SK-N-SH (cell line): ENCODE measurements at regions of chr17 and their contacts with region 1.

Region 1: DNA sequence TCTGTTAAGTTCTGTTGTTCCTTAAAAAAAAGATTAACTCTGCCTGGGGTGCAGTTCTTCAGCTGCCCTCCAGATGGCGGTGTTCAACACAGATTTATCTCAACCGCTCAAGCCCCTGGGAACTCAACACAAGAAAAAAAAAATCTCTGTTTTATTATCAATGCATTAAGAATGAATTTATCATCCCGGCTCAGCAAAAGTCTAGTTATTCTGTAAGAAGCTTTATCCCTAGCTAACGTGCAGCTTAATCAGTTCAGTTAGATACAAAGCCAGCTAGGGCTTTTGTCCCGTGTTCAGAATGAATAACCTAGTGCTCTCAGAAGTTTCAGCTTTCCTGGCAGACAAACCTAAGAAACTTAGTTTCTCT is 475.9 kb upstream of the CCL2 start:
- DNase-seq: peak; percentile 57
- H3K4me3 ChIP-seq: peak overlapping the region in 1 of 2 experiments; percentile 39; a peak in 1 of 4 replicates
- H3K27ac ChIP-seq: no peak overlapping the region
- H3K4me1 ChIP-seq: peaks cover 0 to 3% of the 10 kb centered on the region in 2 experiments; a peak in 1 of 4 replicates
- H3K27me3 ChIP-seq: no peaks in the 10 kb centered on the region
- CTCF ChIP-seq: peak; percentile 97
- EP300 ChIP-seq: no peak
- RAD21 ChIP-seq: peak; percentile 96

Region 2: GRCh38 chr17:33520426-33521330 is 258.5 kb before region 1 on chr17:
- CTCF ChIA-PET with region 1: no interaction called
- POLR2A ChIA-PET with region 1: no interaction called
- DNase-seq: peak; percentile 83
- H3K4me3 ChIP-seq: no peak overlapping the region
- H3K27ac ChIP-seq: no peak overlapping the region
- H3K4me1 ChIP-seq: peaks cover 0 to 5% of the 10 kb centered on the region in 2 experiments; a peak in 1 of 4 replicates
- H3K27me3 ChIP-seq: no peaks in the 10 kb centered on the region
- CTCF ChIP-seq: peak; percentile 89
- EP300 ChIP-seq: no peak
- RAD21 ChIP-seq: peak; percentile 61

Region 3: GRCh38 chr17:33667052-33667509 is 112.1 kb before region 1 on chr17:
- CTCF ChIA-PET with region 1: no interaction called
- POLR2A ChIA-PET with region 1: no interaction called
- DNase-seq: no peak
- H3K4me3 ChIP-seq: no peak overlapping the region
- H3K27ac ChIP-seq: no peak overlapping the region
- H3K4me1 ChIP-seq: no peaks in the 10 kb centered on the region; a peak in 1 of 4 replicates
- H3K27me3 ChIP-seq: no peaks in the 10 kb centered on the region
- CTCF ChIP-seq: no peak
- EP300 ChIP-seq: no peak
- RAD21 ChIP-seq: no peak

Region 4: GRCh38 chr17:33769066-33769465 is 10.1 kb before region 1 on chr17:
- CTCF ChIA-PET with region 1: interaction called, 21 read pairs
- POLR2A ChIA-PET with region 1: no interaction called
- DNase-seq: no peak
- H3K4me3 ChIP-seq: no peak overlapping the region
- H3K27ac ChIP-seq: no peak overlapping the region
- H3K4me1 ChIP-seq: peaks cover 0 to 10% of the 10 kb centered on the region in 2 experiments; a peak in 2 of 4 replicates
- H3K27me3 ChIP-seq: no peaks in the 10 kb centered on the region
- CTCF ChIP-seq: no peak
- EP300 ChIP-seq: no peak
- RAD21 ChIP-seq: no peak

Region 5: DNA sequence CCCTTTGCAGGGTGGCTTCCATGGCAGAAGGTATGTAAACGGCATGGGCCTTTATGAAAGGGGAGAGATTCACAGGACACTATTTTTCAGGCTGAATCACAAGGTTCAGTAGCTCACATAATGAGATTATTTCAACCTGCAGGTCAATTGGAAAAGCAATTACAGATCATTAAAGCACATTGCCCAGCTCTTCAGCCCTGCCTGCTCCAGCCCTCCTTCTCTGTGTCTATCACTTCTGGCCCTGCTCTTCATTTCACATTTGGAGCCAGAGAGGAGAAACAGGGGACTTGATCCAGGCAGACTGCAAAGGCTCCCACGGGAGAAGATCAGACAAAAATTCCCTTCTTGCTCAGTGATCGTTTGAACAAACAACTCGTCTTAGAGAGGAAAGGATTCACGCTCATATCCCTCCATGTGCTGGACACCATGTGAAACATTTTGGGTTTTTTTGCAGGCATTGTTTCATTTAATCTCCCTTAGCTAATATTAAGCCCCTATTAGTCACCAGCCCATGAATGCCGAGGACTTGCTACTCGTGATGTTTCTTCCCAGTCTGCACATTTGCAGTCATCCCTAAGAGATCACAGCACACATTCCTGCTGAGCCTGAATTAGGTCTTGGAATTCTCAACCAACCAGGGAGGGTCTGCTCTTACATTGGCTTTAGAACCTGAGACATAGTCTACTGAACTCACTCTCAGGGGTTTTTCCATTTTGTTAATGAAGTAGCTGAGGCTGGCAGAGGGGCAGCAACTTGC is 32.0 kb after region 1 on chr17:
- CTCF ChIA-PET with region 1: interaction called, 14 read pairs
- POLR2A ChIA-PET with region 1: no interaction called
- DNase-seq: peak; percentile 6
- H3K4me3 ChIP-seq: no peak overlapping the region
- H3K27ac ChIP-seq: no peak overlapping the region
- H3K4me1 ChIP-seq: peaks cover 0 to 9% of the 10 kb centered on the region in 2 experiments; a peak in 1 of 4 replicates
- H3K27me3 ChIP-seq: no peaks in the 10 kb centered on the region
- CTCF ChIP-seq: no peak
- EP300 ChIP-seq: no peak
- RAD21 ChIP-seq: no peak

Region 6: DNA sequence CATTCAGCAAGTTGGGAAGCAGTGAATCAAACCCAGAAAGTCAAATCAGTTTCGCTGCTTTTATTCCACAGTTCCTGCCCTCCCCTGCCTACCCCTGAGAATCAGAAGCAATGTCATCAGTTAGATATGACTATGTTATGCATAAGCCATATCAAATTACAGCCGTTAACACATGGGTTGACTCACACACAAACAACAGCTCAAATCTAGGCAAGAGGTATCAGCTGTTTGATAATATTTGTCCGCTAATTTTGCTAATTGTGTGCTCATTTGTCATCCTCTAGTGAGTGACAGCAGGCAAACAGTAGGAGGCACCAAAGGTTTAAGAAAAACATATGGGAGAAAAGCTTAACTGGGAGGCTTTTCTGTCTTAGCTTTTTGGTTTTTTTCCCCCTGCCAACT is 148.5 kb after region 1 on chr17:
- CTCF ChIA-PET with region 1: interaction called, 46 read pairs
- POLR2A ChIA-PET with region 1: no interaction called
- DNase-seq: peak; percentile 39
- H3K4me3 ChIP-seq: no peak overlapping the region
- H3K27ac ChIP-seq: no peak overlapping the region
- H3K4me1 ChIP-seq: peaks cover 0 to 3% of the 10 kb centered on the region in 2 experiments; a peak in 1 of 4 replicates
- H3K27me3 ChIP-seq: no peaks in the 10 kb centered on the region
- CTCF ChIP-seq: peak; percentile 22
- EP300 ChIP-seq: no peak
- RAD21 ChIP-seq: peak; percentile 70

Region 7: GRCh38 chr17:34156741-34157589 is 377.8 kb after region 1 on chr17:
- CTCF ChIA-PET with region 1: interaction called, 57 read pairs
- POLR2A ChIA-PET with region 1: no interaction called
- DNase-seq: peak; percentile 74
- H3K4me3 ChIP-seq: peak overlapping the region in 1 of 2 experiments; percentile 31; a peak in 1 of 4 replicates
- H3K27ac ChIP-seq: no peak overlapping the region
- H3K4me1 ChIP-seq: peaks cover 0 to 3% of the 10 kb centered on the region in 2 experiments; a peak in 1 of 4 replicates
- H3K27me3 ChIP-seq: no peaks in the 10 kb centered on the region
- CTCF ChIP-seq: no peak
- EP300 ChIP-seq: no peak
- RAD21 ChIP-seq: no peak